ENCODE measurements at regions of chr12 and their contacts with region 1.

Region 1: DNA sequence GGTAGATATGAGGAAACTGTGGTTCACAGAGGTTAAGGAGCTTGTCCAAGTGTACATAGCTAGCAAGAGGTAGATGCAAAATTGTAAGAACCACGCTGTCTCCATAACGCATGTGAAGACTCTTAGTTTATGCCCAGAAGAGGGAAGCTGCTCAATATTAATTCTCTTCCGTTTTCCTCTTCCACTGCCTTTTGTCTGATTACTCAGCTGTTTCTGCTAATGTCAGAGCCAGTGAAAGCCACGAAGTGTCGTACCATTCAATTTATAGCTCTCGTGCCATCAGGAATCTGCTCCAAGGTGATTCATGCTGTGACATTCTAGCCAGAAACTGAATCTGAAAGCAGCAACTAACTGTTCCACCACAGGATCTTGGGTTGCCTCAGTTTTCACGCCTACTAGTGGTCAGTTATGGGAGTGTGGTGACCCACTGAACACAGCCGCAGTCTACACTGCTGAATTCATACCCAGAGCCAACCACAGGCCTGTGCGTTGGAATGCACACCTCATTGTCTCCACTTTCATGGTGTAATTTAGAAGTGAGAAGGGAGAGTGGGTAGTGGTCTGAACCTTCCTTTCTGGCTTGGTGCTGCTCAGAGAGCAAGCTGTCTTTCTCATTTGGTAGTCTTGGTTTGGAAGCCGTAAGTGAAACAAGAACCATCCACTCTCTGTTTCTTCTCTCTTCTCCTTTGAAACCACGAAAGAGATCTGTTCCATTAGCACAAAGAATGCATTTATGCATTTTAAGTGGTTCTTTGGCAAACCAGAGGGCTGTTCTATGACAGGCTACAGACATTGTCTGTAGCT is 74.2 kb upstream of the NAP1L1 start:
- DNase-seq: peak; percentile 46 to 57 (median 51)
- H3K4me3 ChIP-seq: peak overlapping the region in 1 of 2 donors; percentile 20
- H3K4me3 Mint-ChIP-seq: peak overlapping the region; percentile 68 to 77 (median 75)
- H3K27ac ChIP-seq: no peak overlapping the region
- H3K27ac Mint-ChIP-seq: peak overlapping the region in 6 of 7 donors; percentile 2 to 83 (median 70)
- H3K4me1 ChIP-seq: no peaks in the 10 kb centered on the region
- H3K4me1 Mint-ChIP-seq: peaks cover 8 to 11% (median 10%) of the 10 kb centered on the region in 4 donors
- H3K27me3 ChIP-seq: no peaks in the 10 kb centered on the region
- H3K27me3 Mint-ChIP-seq: no peaks in the 10 kb centered on the region

Region 2: DNA sequence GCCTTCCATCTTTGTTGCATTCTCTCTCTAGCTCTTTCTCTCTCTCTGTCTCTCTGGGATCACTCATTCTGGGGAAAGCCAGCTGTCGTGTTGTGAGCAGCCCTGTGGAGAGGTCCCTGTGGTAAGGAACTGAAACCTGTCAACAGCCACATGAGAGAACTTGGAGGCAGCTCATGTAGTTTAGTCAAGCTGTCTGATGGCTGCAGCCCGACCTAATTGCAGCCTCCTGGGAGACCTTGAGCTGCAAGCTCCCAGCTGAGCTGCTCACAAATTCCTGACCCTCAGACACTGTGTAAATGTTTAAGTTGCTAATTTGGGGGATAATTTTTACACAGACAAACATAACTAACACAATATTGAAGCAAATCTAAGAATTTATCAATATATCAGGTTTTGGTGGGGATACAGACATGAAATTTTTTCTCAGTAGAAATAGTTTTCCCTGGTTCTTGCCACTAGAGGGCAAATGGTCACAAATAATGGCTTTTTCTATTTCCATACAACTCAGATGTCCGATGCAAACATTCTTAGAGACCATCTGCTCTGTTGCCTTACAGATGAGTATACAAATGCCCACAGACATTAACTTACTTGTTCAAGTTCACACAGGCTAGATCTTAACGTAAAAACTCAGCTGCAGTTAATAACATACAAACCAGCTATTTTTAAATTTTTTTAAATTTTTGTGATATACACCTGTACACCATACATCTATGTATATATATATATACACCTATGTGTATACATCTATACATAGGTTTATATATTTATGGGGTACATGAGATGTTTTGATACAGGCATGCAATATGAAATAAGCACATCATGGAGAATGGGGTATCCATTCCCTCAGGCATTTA is 631.8 kb before region 1 on chr12:
- CTCF ChIA-PET with region 1: interaction called, 3 read pairs
- POLR2A ChIA-PET with region 1: no interaction called
- intact Hi-C with region 1: loop called (anchors 1 kb)
- DNase-seq: peak in 4 of 5 donors; percentile 32 to 42 (median 40)
- H3K4me3 ChIP-seq: no peak overlapping the region
- H3K4me3 Mint-ChIP-seq: no peak overlapping the region
- H3K27ac ChIP-seq: no peak overlapping the region
- H3K27ac Mint-ChIP-seq: no peak overlapping the region
- H3K4me1 ChIP-seq: no peaks in the 10 kb centered on the region
- H3K4me1 Mint-ChIP-seq: peaks cover 0 to 2% (median 0%) of the 10 kb centered on the region in 4 donors
- H3K27me3 ChIP-seq: no peaks in the 10 kb centered on the region
- H3K27me3 Mint-ChIP-seq: peaks cover 5 to 22% of the 10 kb centered on the region in 2 donors

Region 3: GRCh38 chr12:76144245-76144549 is 14.5 kb before region 1 on chr12:
- CTCF ChIA-PET with region 1: interaction called, 15 read pairs
- POLR2A ChIA-PET with region 1: interaction called, 3 read pairs
- intact Hi-C with region 1: no loop called
- DNase-seq: peak; percentile 35 to 53 (median 45)
- H3K4me3 ChIP-seq: no peak overlapping the region
- H3K4me3 Mint-ChIP-seq: peak overlapping the region in 5 of 8 donors; percentile 1 to 71 (median 6)
- H3K27ac ChIP-seq: no peak overlapping the region
- H3K27ac Mint-ChIP-seq: peak overlapping the region in 4 of 7 donors; percentile 1 to 54 (median 16)
- H3K4me1 ChIP-seq: peaks cover 17% of the 10 kb centered on the region
- H3K4me1 Mint-ChIP-seq: peaks cover 17 to 25% (median 21%) of the 10 kb centered on the region in 4 donors
- H3K27me3 ChIP-seq: no peaks in the 10 kb centered on the region
- H3K27me3 Mint-ChIP-seq: no peaks in the 10 kb centered on the region

Measured in CD4-positive, alpha-beta memory T cell (primary cell).